Activated T-helper 2 cell treated with anti-CD3 and anti-CD28 coated beads, Interferon-gamma antibody, Interleukin-2, Interleukin-4, amounts not matched to agents 10 μg/mL and 5 μg/mL and 100 μg/mL, durations not matched to agents 14 hours and 24 hours and 36 hours (primary cell): ENCODE measurements at regions of chr5 and their contacts with region 1.

Region 1: GRCh38 chr5:132714456-132715307 is 22.7 kb downstream of the KIF3A start:
- DNase-seq: no peak
- H3K4me3 Mint-ChIP-seq: no peak overlapping the region
- H3K27ac Mint-ChIP-seq: peak overlapping the region; percentile 9
- H3K4me1 Mint-ChIP-seq: peaks cover 18% of the 10 kb centered on the region
- H3K27me3 Mint-ChIP-seq: no peaks in the 10 kb centered on the region

Region 2: DNA sequence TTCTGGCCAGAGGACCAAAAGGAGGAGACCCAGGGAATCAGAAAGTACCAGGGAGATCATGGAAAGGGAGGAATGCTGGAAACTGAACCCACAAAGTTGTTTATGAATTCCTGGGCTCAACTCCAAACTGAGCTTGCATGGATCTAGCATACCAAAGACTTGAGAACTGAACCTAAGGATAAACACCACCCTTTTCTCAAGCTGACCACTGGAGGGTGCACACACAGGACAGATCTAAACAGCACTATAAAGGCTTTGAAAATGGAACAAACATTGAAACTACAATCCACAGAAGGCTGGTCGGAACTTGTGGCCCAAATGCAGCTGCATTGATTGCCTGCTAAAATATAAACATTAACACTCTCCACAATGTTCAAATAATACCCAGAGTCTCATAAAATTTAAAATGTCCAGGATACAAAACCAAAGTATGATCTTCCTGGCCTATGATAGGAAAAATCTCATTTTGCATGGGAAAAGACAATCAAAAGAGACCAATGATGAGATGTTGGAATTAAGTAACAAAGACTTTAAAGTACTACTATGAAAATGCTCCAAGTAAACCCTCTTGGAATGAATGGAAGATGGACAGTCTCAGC is 208.5 kb before region 1 on chr5:
- intact Hi-C with region 1: loop called (anchors 5 kb)
- DNase-seq: no peak
- H3K4me3 Mint-ChIP-seq: no peak overlapping the region
- H3K27ac Mint-ChIP-seq: no peak overlapping the region
- H3K4me1 Mint-ChIP-seq: peaks cover 19% of the 10 kb centered on the region
- H3K27me3 Mint-ChIP-seq: peaks cover 14% of the 10 kb centered on the region

Region 3: GRCh38 chr5:132777209-132778069 is 62.8 kb after region 1 on chr5 and contains the start of gene SEPTIN8:
- intact Hi-C with region 1: no loop called
- DNase-seq: peak; percentile 46
- H3K4me3 Mint-ChIP-seq: peak within 1 kb of the TSS; percentile 82
- H3K27ac Mint-ChIP-seq: peak within 1 kb of the TSS; percentile 76
- H3K4me1 Mint-ChIP-seq: peaks cover 29% of the 10 kb centered on the region
- H3K27me3 Mint-ChIP-seq: peaks cover 65% of the 10 kb centered on the region
- total RNA-seq, gene SEPTIN8: 34.9 and 35.9 TPM in 2 replicates

Region 4: DNA sequence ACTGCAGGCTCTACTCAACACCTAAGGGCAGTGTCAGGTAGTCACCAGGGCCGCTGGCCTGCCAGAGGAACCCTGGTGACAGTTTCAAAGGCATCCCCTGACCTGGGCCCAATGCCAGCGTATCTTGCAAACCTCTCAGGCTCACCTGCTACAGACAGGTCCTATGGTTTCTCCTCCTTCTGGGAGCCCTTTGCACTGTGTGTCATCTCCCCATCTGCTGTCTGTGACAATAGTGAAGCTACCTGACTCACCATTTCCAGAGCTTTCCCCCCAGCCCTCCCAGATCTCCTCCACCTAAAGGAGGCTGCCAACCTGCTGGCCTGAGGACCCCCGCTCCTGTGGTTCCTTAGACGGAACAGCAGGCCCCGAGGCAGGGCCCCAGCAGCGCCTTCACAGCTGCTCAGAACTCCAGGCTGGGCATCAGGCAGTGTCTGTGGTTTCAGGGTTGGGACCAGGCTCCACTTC is 694.6 kb after region 1 on chr5:
- intact Hi-C with region 1: no loop called
- DNase-seq: no peak
- H3K4me3 Mint-ChIP-seq: no peak overlapping the region
- H3K27ac Mint-ChIP-seq: no peak overlapping the region
- H3K4me1 Mint-ChIP-seq: no peaks in the 10 kb centered on the region
- H3K27me3 Mint-ChIP-seq: peaks cover 28% of the 10 kb centered on the region